ENCODE measurements at regions of chr17 and their contacts with region 1.

Region 1: DNA sequence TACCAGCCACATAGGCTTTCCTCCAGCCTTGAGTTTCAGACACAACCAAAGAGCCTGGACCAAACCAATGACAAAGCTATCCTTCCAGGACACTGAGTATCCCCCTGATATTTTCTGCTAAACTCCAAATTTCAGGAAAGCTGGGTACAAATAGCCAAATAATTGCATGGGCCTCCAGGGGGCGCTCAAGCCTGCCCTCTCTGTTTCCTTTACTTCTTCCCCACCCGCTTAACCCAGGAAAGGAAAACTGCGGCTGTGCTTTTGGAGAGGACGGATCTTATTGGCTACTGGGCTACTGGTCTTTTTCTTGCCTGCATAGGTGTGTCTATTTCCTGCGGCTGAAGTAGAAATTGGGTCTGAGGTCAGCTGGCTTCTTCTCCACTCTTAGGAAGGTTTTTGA is 30.1 kb downstream of the GNGT2 start:
- DNase-seq: peak; percentile 75
- H3K4me3 Mint-ChIP-seq: no peak overlapping the region
- H3K27ac Mint-ChIP-seq: no peak overlapping the region
- H3K4me1 Mint-ChIP-seq: peaks cover 2% of the 10 kb centered on the region
- H3K27me3 Mint-ChIP-seq: peaks cover 2% of the 10 kb centered on the region

Region 2: DNA sequence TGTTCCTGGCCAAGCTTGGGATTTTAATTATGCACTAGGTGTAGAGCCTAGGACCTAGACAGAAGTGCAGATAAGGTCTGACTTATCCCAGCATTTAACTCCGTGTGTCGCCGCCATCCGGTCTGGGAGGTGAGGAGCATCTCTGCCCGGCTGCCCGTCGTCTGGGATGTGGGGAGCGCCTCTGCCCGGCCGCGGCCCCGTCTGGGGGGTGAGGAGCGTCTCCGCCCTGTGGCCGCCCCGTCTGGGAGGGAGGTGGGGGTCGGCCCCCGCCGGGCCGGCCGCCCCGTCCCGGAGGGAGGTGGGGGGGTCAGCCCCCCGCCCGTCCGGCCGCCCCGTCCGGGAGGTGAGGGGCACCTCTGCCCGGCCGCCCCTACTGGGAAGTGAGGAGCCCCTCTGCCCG is 54.9 kb before region 1 on chr17:
- CTCF ChIA-PET with region 1: no interaction called
- POLR2A ChIA-PET with region 1: no interaction called
- intact Hi-C with region 1: no loop called
- DNase-seq: no peak
- H3K4me3 Mint-ChIP-seq: no peak overlapping the region
- H3K27ac Mint-ChIP-seq: no peak overlapping the region
- H3K4me1 Mint-ChIP-seq: no peaks in the 10 kb centered on the region
- H3K27me3 Mint-ChIP-seq: peaks cover 22% of the 10 kb centered on the region

Region 3: GRCh38 chr17:49148171-49148570 is 32.1 kb before region 1 on chr17:
- CTCF ChIA-PET with region 1: no interaction called
- POLR2A ChIA-PET with region 1: no interaction called
- intact Hi-C with region 1: no loop called
- DNase-seq: no peak
- H3K4me3 Mint-ChIP-seq: no peak overlapping the region
- H3K27ac Mint-ChIP-seq: no peak overlapping the region
- H3K4me1 Mint-ChIP-seq: no peaks in the 10 kb centered on the region
- H3K27me3 Mint-ChIP-seq: peaks cover 25% of the 10 kb centered on the region

Region 4: GRCh38 chr17:49170216-49170615 is 10.1 kb before region 1 on chr17:
- CTCF ChIA-PET with region 1: interaction called, 11 read pairs
- POLR2A ChIA-PET with region 1: no interaction called
- intact Hi-C with region 1: no loop called
- DNase-seq: no peak
- H3K4me3 Mint-ChIP-seq: no peak overlapping the region
- H3K27ac Mint-ChIP-seq: no peak overlapping the region
- H3K4me1 Mint-ChIP-seq: no peaks in the 10 kb centered on the region
- H3K27me3 Mint-ChIP-seq: peaks cover 54% of the 10 kb centered on the region

Region 5: DNA sequence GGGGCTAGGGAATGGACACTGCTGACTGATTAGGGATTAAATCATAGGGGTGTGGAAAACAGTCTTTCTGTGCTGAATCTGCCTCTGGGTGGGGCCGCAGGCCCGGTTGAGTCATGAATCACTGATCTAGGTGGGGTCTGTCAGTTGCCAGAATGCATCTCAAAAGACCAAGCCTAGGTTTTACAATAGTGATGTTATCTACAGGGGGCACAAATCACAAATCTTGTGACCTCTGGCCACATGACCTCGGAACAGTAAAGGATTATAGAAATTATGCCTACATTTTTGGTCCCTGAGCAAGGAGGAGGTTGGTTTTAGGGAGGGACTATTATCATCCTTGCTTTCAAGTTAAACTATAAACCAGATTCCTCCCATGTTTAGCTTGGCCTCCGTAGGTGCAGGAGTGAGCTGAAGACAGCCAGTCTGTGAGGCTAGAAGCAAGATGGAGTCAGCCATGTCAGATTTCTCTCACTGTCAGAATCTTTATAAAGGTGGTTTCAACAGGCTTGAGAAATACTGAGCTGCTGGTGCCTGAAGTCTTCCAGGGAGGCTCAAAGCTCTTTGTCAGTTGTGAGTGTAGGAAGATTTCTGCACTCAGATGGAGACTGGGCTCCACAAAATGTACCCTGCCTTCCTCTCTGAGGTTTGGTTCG is 17.2 kb after region 1 on chr17:
- CTCF ChIA-PET with region 1: interaction called, 32 read pairs
- POLR2A ChIA-PET with region 1: no interaction called
- intact Hi-C with region 1: no loop called
- DNase-seq: no peak
- H3K4me3 Mint-ChIP-seq: no peak overlapping the region
- H3K27ac Mint-ChIP-seq: no peak overlapping the region
- H3K4me1 Mint-ChIP-seq: peaks cover 25% of the 10 kb centered on the region
- H3K27me3 Mint-ChIP-seq: no peaks in the 10 kb centered on the region

Region 6: DNA sequence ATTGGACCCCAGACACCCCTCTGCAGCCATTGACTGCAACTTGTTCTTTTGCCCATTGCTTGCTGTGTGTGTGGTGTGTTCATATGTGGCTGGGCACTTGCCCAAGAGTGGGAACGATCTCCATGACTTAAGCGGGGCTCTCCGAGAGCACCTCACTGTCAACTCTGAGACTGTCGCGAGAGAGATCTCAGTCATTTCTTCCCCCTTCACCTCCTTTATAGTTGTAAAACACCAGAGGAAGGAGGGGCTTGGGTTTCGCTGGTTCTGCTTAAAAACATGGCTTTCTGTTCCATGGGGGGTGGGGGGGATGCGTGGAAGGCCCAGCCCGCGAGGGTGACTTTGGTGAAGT is 42.8 kb after region 1 on chr17:
- CTCF ChIA-PET with region 1: interaction called, 187 read pairs
- POLR2A ChIA-PET with region 1: no interaction called
- intact Hi-C with region 1: loop called (anchors 1 kb)
- DNase-seq: no peak
- H3K4me3 Mint-ChIP-seq: no peak overlapping the region
- H3K27ac Mint-ChIP-seq: no peak overlapping the region
- H3K4me1 Mint-ChIP-seq: peaks cover 33% of the 10 kb centered on the region
- H3K27me3 Mint-ChIP-seq: peaks cover 19% of the 10 kb centered on the region

Region 7: GRCh38 chr17:49290690-49291359 is 110.5 kb after region 1 on chr17:
- CTCF ChIA-PET with region 1: interaction called, 31 read pairs
- POLR2A ChIA-PET with region 1: no interaction called
- intact Hi-C with region 1: no loop called
- DNase-seq: no peak
- H3K4me3 Mint-ChIP-seq: no peak overlapping the region
- H3K27ac Mint-ChIP-seq: no peak overlapping the region
- H3K4me1 Mint-ChIP-seq: peaks cover 15% of the 10 kb centered on the region
- H3K27me3 Mint-ChIP-seq: no peaks in the 10 kb centered on the region

Region 8: GRCh38 chr17:49370971-49371834 is 190.9 kb after region 1 on chr17:
- CTCF ChIA-PET with region 1: no interaction called
- POLR2A ChIA-PET with region 1: no interaction called
- intact Hi-C with region 1: no loop called
- DNase-seq: no peak
- H3K4me3 Mint-ChIP-seq: no peak overlapping the region
- H3K27ac Mint-ChIP-seq: no peak overlapping the region
- H3K4me1 Mint-ChIP-seq: peaks cover 3% of the 10 kb centered on the region
- H3K27me3 Mint-ChIP-seq: no peaks in the 10 kb centered on the region